GM12878 (cell line): ENCODE measurements at regions of chr12 and their contacts with region 1.

Region 1: DNA sequence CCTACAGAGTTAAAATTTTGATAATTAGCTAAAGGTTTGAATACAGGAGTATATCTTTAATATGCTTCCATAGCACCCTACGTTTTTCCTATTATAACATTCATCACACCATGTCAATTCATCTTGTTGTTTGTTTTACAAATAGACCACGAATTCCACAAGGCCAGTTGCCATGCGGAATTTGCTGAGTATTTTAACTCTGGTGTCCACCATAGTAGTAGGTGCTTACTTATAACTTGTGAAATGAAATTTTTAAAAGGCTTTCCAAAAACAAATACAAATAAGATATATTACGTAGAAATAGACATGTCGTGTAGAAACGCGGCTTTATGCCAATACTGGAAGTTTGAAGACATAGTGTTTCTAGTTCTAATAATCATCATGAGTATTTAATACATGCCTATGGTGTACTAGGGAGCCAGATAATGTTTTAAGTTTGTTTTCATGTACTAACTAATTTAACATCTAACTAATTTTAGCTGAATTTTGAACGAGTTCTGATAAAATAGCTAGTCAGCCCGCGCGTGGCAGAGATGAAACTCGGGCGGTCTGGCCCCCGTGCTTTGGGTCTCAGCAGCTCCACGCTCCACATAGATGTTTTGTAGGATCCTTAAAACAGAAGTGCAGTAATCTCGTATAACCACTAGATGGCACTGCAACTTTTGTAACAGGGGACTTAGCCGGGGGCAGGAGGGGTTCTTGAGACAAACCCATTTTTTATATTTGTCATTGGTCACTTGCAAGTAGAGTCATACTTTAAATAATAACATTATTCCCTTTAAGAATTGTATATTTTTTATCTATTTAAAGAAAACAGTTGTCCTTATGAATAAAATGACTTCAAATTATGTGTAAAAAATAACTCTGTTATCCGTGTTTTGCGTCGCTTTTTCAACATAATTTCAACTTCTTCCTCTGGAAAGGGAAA is 10.2 kb downstream of the CD69 start:
- DNase-seq: no peak
- ATAC-seq: peak; percentile 61
- H3K4me3 ChIP-seq: no peak overlapping the region
- H3K27ac ChIP-seq: no peak overlapping the region
- H3K4me1 ChIP-seq: no peaks in the 10 kb centered on the region
- H3K27me3 ChIP-seq: no peaks in the 10 kb centered on the region
- CTCF ChIP-seq: peak; percentile 71 to 88 (median 74)
- EP300 ChIP-seq: no peak
- POLR2A ChIP-seq: no peak
- RAD21 ChIP-seq: peak; percentile 97

Region 2: GRCh38 chr12:9073076-9073475 is 677.5 kb before region 1 on chr12:
- CTCF ChIA-PET with region 1: no interaction called
- POLR2A ChIA-PET with region 1: no interaction called
- RAD21 ChIA-PET with region 1: no interaction called
- SMC1A ChIA-PET with region 1: no interaction called
- in situ Hi-C with region 1: no loop called
- intact Hi-C with region 1: no loop called
- DNase-seq: no peak
- ATAC-seq: no peak
- H3K4me3 ChIP-seq: no peak overlapping the region
- H3K27ac ChIP-seq: no peak overlapping the region
- H3K4me1 ChIP-seq: no peaks in the 10 kb centered on the region
- H3K27me3 ChIP-seq: no peaks in the 10 kb centered on the region; a peak in 1 of 4 replicates
- CTCF ChIP-seq: no peak
- EP300 ChIP-seq: no peak
- POLR2A ChIP-seq: no peak
- RAD21 ChIP-seq: no peak

Region 3: GRCh38 chr12:9634177-9634803 is 116.2 kb before region 1 on chr12:
- CTCF ChIA-PET with region 1: interaction called, 13 read pairs
- POLR2A ChIA-PET with region 1: no interaction called
- RAD21 ChIA-PET with region 1: interaction called, 8 read pairs
- SMC1A ChIA-PET with region 1: interaction called, 13 read pairs
- in situ Hi-C with region 1: no loop called
- intact Hi-C with region 1: no loop called
- DNase-seq: no peak
- ATAC-seq: peak; percentile 79
- H3K4me3 ChIP-seq: no peak overlapping the region
- H3K27ac ChIP-seq: no peak overlapping the region
- H3K4me1 ChIP-seq: peaks cover 15% of the 10 kb centered on the region; the same call in 1 of the 2 replicates
- H3K27me3 ChIP-seq: no peaks in the 10 kb centered on the region
- CTCF ChIP-seq: peak; percentile 52 to 71 (median 61); a peak in 5 of 6 replicates
- EP300 ChIP-seq: no peak
- POLR2A ChIP-seq: no peak
- RAD21 ChIP-seq: peak; percentile 91

Region 4: DNA sequence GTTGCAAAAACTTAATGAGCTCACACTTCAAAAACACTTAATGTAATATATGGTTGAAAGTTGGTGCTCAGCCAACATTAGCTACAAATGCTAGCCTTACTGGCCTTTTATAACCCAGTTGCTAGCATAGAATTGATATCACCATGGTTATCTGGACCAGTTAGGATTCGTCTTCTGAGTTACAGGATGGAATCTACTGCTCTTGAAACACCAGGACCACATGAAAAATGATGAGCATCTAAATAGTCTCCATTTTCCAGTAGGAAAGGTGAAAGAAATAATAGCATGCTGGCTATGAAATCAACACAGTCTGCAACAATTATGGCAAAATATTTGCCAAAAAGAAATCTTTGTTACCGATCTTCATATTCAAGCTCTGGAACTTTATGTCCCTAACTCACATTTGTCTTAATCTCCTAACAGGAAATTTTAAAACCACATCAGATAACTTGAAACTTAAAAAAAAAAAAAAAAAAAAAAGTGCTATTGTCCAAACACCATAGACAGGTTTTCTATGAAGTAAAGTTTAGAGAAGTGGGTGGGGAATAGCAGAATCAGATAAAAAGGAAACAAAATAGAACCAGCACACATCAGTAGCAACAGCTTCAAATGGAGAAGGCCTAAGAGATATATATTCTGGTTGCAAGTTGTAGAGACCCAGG is 22.8 kb after region 1 on chr12:
- CTCF ChIA-PET with region 1: interaction called, 57 read pairs
- POLR2A ChIA-PET with region 1: no interaction called
- RAD21 ChIA-PET with region 1: interaction called, 134 read pairs
- SMC1A ChIA-PET with region 1: interaction called, 58 read pairs
- in situ Hi-C with region 1: no loop called
- intact Hi-C with region 1: no loop called
- DNase-seq: no peak
- ATAC-seq: no peak
- H3K4me3 ChIP-seq: no peak overlapping the region
- H3K27ac ChIP-seq: no peak overlapping the region
- H3K4me1 ChIP-seq: peaks cover 7% of the 10 kb centered on the region; the same call in 1 of the 2 replicates
- H3K27me3 ChIP-seq: no peaks in the 10 kb centered on the region
- CTCF ChIP-seq: no peak
- EP300 ChIP-seq: no peak
- POLR2A ChIP-seq: no peak
- RAD21 ChIP-seq: no peak

Region 5: DNA sequence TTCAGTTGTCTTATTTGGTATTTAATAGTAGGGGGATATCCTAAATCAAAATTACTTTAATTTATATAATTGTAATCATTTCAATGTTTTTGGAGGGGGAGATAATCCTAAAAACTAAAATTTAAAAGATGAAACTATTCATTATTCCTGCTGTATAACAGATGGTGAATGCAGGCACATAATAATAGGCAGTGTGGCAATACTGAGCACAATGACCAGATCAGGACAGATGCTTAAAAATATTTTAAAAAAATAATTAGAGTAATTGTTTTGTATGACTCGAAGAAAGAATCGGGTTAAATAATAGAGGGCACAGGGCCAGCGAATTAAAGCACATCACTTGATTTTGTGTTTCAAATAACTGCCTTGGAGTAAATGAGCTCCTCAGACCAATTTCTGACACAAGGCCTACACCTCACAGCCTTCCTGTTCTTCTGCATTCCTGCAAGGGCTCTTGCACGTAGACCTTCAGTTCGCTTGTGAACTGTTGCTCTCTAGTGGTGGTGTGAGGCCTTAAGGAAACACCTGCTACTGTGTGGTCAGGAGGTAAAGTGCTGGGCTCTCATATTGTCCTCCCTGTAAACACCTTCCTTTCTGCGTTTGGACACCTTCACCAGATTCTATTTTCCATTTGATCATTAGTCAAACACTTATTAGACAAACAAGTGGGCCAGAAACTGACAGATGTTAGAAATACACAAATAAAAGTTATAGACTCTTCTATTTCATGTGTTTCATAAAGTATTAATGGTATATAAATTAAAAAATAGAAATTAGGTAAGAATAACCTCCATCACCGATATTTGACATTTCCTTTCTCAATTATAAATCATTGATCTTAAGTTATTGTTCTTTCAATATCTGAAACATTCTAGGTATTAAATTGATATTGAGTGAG is 47.4 kb after region 1 on chr12:
- CTCF ChIA-PET with region 1: interaction called, 835 read pairs
- POLR2A ChIA-PET with region 1: interaction called, 10 read pairs
- RAD21 ChIA-PET with region 1: interaction called, 577 read pairs
- SMC1A ChIA-PET with region 1: interaction called, 814 read pairs
- in situ Hi-C with region 1: loop called (anchors 5 kb)
- intact Hi-C with region 1: loop called (anchors 1 kb)
- DNase-seq: peak; percentile 85
- ATAC-seq: peak; percentile 100
- H3K4me3 ChIP-seq: no peak overlapping the region
- H3K27ac ChIP-seq: no peak overlapping the region
- H3K4me1 ChIP-seq: peaks cover 10% of the 10 kb centered on the region; the same call in 1 of the 2 replicates
- H3K27me3 ChIP-seq: no peaks in the 10 kb centered on the region
- CTCF ChIP-seq: peak; percentile 80 to 87 (median 83)
- EP300 ChIP-seq: no peak
- POLR2A ChIP-seq: no peak
- RAD21 ChIP-seq: peak; percentile 100

Region 6: GRCh38 chr12:9869307-9870161 is 119.0 kb after region 1 on chr12 and contains the start of gene CLEC2B:
- CTCF ChIA-PET with region 1: interaction called, 7 read pairs
- POLR2A ChIA-PET with region 1: no interaction called
- RAD21 ChIA-PET with region 1: interaction called, 6 read pairs
- SMC1A ChIA-PET with region 1: interaction called, 13 read pairs
- in situ Hi-C with region 1: no loop called
- intact Hi-C with region 1: loop called (anchors 5 kb)
- DNase-seq: peak; percentile 40
- ATAC-seq: peak; percentile 53
- H3K4me3 ChIP-seq: peak within 1 kb of the TSS; percentile 58
- H3K27ac ChIP-seq: peak within 1 kb of the TSS; percentile 75
- H3K4me1 ChIP-seq: no peaks in the 10 kb centered on the region
- H3K27me3 ChIP-seq: no peaks in the 10 kb centered on the region
- CTCF ChIP-seq: no peak
- EP300 ChIP-seq: no peak
- POLR2A ChIP-seq: no peak
- RAD21 ChIP-seq: no peak
- polyA plus RNA-seq, gene CLEC2B: 18.5 to 21.6 TPM

Region 7: GRCh38 chr12:9940375-9940774 is 189.8 kb after region 1 on chr12:
- CTCF ChIA-PET with region 1: interaction called, 12 read pairs
- POLR2A ChIA-PET with region 1: no interaction called
- RAD21 ChIA-PET with region 1: interaction called, 3 read pairs
- SMC1A ChIA-PET with region 1: interaction called, 5 read pairs
- in situ Hi-C with region 1: no loop called
- intact Hi-C with region 1: no loop called
- DNase-seq: no peak
- ATAC-seq: no peak
- H3K4me3 ChIP-seq: no peak overlapping the region
- H3K27ac ChIP-seq: no peak overlapping the region
- H3K4me1 ChIP-seq: no peaks in the 10 kb centered on the region
- H3K27me3 ChIP-seq: peaks cover 0 to 3% of the 10 kb centered on the region in 2 experiments; a peak in 2 of 4 replicates
- CTCF ChIP-seq: peak; percentile 39 to 47 (median 47); a peak in 5 of 6 replicates
- EP300 ChIP-seq: no peak
- POLR2A ChIP-seq: no peak
- RAD21 ChIP-seq: peak; percentile 61